GM10248 (cell line): ENCODE measurements at regions of chr5 and their contacts with region 1.

Region 1: DNA sequence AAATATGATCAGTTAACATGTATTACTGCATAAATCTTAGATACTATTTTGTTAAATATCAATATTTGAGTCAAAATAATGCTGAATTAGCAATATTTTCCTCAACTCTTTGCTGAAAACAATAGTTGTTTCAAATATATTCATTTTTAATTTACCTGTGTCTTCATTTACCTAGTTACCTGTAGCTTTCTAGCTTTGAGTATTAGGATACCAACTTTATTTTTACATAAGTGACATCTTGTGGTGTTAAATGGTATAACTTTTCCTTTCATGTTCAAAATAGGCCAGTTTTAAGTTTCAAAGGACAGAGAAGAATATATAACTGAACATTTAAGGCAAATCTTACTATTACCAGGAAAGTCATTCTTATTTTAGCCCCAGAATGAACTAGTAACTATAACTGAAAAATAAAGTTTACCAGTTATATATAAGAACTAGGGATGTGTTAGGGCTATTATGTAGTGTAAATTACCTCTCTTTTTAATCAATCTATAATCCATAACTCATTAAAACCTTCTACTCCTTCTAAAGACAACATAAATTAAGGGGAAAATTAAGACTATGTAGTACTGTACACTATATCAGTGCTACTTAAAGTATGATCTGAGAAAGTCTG is 25.3 kb downstream of the AP3B1 start:
- DNase-seq: peak; percentile 21
- CTCF ChIP-seq: peak; percentile 27

Region 2: DNA sequence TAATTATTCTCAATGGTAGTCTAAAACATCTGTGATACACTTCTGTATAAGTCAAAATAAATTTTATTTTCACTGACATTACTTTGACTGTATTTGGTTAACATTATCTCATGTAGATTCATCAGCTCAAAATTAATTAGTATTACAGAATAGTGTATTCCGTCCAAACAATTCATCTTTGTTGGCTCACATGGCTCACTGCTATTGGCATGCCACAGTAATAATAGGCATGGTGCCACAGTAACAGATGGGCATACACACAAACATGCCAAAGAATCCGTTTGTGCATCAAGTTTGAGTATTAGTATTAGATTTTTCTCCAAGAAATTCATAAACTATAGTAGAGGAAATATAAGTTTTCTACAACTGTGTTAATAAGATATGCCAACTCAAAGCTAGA is 11.1 kb after region 1 on chr5:
- CTCF ChIA-PET with region 1: interaction called, 10 read pairs
- POLR2A ChIA-PET with region 1: no interaction called
- DNase-seq: no peak
- CTCF ChIP-seq: no peak